Kidney (tissue), 22 donors: ENCODE measurements at regions of chr7 and their contacts with region 1.

Region 1: GRCh38 chr7:107725151-107725740 is 18.7 kb upstream of the CBLL1 start:
- DNase-seq: peak in 3 of 5 donors; percentile 31 to 80 (median 52)
- H3K4me3 ChIP-seq: no peak overlapping the region
- H3K27ac ChIP-seq: no peak overlapping the region
- H3K4me1 ChIP-seq: no peaks in the 10 kb centered on the region
- H3K27me3 ChIP-seq: no peaks in the 10 kb centered on the region
- CTCF ChIP-seq: peak; percentile 53

Region 2: DNA sequence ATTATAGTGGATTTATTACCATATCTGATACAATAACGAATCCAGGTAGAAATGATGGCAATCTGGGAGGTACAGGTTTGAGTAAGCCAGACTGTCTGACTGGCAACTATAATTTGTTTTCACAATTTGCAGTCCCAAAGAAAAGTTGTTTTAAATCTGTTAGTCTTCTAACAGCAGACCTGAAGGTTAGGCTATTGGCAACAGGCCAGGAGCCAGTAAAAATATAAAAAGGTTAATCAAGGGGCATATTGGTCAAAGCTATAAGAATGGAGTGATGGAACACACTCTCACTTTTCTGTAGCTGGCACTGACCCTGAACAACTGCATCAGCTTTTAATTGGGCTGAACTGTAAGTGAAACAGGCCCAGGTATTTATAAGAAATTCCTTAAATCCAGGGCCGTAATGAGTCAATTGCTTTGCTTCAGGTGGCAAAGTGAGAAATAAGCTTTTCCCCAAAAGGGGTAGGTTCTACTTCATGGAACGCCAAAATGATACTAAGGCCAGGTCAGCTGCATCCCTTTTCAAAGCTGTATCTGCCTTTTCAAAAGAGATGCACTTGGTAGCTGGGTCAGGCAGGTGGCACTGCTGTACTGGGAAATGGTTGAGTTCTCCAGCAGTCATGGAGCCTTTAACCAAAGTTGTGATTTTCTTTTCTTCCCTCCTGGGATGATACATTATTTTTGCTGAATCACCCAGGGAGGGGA is 262.4 kb before region 1 on chr7:
- intact Hi-C with region 1: loop called (anchors 10 kb)
- DNase-seq: peak in 4 of 5 donors; percentile 49 to 72 (median 60)
- H3K4me3 ChIP-seq: no peak overlapping the region
- H3K27ac ChIP-seq: no peak overlapping the region
- H3K4me1 ChIP-seq: no peaks in the 10 kb centered on the region
- H3K27me3 ChIP-seq: no peaks in the 10 kb centered on the region
- CTCF ChIP-seq: peak; percentile 76

Region 3: GRCh38 chr7:108235451-108236061 is 510.3 kb after region 1 on chr7:
- intact Hi-C with region 1: no loop called
- DNase-seq: no peak
- H3K4me3 ChIP-seq: no peak overlapping the region
- H3K27ac ChIP-seq: no peak overlapping the region
- H3K4me1 ChIP-seq: no peaks in the 10 kb centered on the region
- H3K27me3 ChIP-seq: no peaks in the 10 kb centered on the region
- CTCF ChIP-seq: no peak